Endothelial cell of umbilical vein (primary cell): ENCODE measurements at regions of chr19 and their contacts with region 1.

Region 1: GRCh38 chr19:44723952-44724319 is 24.6 kb upstream of the BCL3 start:
- DNase-seq: peak; percentile 81
- H3K4me3 ChIP-seq: no peak overlapping the region
- H3K27ac ChIP-seq: no peak overlapping the region
- H3K4me1 ChIP-seq: peaks cover 36% of the 10 kb centered on the region
- H3K27me3 ChIP-seq: no peaks in the 10 kb centered on the region
- CTCF ChIP-seq: peak; percentile 90 to 98
- POLR2A ChIP-seq: no peak

Region 2: DNA sequence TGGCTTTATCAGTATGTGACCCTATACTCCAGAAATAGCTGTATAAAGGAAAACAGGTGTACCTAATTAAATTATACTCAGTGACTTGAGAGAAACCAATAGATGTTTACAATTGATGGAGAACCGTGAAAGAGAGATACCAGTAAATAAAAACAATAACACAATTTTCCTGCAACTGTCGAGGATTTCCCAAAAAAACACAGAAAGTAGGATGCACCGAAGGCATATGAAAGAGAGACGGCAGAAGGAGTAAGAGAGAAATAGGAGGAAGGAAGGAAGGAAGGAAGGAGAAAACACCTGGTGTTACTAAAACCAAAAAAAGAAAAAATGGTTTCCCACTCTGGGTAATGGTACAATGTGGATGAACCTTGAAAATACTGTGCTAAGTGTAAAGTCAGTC is 268.8 kb before region 1 on chr19:
- CTCF ChIA-PET with region 1: no interaction called
- POLR2A ChIA-PET with region 1: no interaction called
- dilution Hi-C with region 1: no loop called
- intact Hi-C with region 1: no loop called
- DNase-seq: no peak
- H3K4me3 ChIP-seq: no peak overlapping the region
- H3K27ac ChIP-seq: no peak overlapping the region
- H3K4me1 ChIP-seq: no peaks in the 10 kb centered on the region
- H3K27me3 ChIP-seq: no peaks in the 10 kb centered on the region
- CTCF ChIP-seq: no peak
- POLR2A ChIP-seq: no peak

Region 3: DNA sequence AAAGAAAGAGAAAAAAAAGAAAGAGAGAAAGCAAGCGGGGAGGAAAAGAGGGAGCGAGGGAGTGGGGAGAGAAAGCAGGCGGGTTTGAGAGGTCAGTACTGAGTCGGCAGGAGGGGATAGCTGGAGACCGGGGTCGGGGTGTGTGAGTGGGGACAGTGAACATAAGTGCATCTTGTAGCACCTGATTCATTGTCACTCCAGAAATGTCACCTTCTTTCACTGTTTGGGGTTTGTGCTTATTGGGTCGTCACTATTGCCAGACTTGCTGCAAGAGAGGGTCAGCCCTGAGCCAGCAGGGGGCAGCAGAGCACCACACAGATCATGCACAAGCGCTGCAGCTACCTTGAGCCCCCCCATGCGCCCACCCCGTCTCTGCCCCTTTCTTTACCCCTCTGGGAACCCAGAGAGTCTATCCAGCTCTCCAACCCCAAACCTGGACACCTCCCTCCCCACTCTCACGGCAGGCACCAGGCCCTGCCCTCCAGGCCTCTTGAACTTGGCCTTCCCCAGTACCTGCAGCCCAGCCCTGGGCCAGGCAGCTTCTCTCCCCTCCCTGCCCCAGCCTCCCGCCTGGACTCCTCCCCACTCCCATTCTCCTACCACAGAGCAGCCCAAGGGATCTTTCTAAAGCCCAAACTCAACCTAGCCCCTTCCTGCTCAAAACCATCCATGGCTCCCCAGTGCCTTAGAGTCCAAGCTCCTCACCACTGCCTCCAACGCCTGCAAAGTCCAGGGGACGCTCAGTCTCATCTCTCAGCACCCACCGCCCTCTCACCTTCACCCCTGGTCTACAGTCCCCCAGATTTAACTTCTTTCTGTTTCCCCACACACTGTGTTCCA is 34.7 kb before region 1 on chr19:
- CTCF ChIA-PET with region 1: interaction called, 239 read pairs
- POLR2A ChIA-PET with region 1: interaction called, 3 read pairs
- dilution Hi-C with region 1: no loop called
- intact Hi-C with region 1: loop called (anchors 1 kb)
- DNase-seq: peak; percentile 70
- H3K4me3 ChIP-seq: no peak overlapping the region
- H3K27ac ChIP-seq: no peak overlapping the region
- H3K4me1 ChIP-seq: peaks cover 30% of the 10 kb centered on the region
- H3K27me3 ChIP-seq: no peaks in the 10 kb centered on the region
- CTCF ChIP-seq: peak; percentile 79 to 96
- POLR2A ChIP-seq: no peak

Region 4: DNA sequence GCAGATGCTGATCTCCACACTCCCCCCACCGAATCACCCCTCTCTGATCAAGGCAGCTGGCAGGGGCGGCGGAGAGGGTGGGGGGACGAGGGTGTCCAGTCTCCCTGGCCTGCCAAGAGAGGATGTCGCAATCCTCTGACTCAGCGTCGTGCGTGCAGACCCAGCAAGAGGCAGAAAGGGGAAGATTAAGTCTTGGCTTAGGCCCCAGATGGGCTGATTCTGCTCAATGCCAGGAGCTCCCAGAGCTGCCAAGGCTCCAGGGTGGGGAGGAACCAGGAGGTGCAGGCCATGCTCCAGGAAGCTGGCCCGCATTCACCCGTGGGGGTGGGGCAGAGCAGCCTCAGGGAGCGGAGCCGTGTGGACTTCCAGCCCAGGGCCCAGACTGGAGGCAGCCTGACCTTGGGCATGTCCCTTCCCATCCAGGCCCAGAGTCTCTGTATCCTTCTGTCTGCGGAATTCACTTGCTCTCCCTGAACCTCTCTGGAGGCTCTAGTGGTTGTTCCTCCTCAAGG is 18.0 kb after region 1 on chr19:
- CTCF ChIA-PET with region 1: interaction called, 57 read pairs
- POLR2A ChIA-PET with region 1: interaction called, 4 read pairs
- dilution Hi-C with region 1: no loop called
- intact Hi-C with region 1: no loop called
- DNase-seq: peak; percentile 98
- H3K4me3 ChIP-seq: no peak overlapping the region
- H3K27ac ChIP-seq: peak overlapping the region; percentile 96
- H3K4me1 ChIP-seq: peaks cover 25% of the 10 kb centered on the region
- H3K27me3 ChIP-seq: no peaks in the 10 kb centered on the region
- CTCF ChIP-seq: no peak
- POLR2A ChIP-seq: peak; percentile 83

Region 5: DNA sequence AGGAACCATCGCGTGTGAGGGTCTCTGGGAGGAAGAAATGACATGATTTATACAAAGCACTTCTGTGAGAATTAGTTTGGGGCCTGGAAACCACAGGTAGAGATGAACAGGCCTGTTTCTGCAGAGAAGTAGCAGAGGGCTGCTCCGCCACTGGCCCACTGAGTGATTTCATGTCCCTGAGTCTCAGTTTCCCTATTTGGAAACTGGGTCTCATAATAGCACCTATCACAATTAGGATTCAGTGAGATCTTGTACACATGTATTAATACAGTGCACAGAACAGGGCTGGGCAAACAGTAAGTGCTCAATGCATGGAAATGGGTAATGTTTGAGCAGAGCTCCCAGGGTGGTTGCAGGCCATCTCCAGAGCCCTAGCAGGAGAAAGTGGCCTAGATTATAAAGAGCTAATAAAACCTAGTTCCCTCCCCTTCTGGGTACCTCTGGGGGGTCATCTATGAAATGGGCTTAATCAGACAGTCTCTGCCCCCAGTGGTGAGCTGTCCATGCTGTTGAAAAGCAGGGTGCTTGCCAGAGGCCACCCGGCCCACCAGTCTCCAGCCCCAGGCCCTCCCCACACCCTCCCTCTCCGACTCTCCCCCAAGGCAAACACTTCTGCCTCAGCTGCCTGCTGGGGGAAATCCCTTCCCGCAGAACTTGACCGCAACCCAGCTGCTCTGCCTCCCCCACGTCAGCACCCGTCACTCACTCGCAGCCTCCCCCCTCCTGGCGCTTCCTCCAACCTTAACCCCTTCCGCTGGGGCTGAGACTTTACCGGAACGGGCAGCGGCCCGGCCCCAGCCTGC is 29.1 kb after region 1 on chr19:
- CTCF ChIA-PET with region 1: interaction called, 82 read pairs
- POLR2A ChIA-PET with region 1: interaction called, 3 read pairs
- dilution Hi-C with region 1: no loop called
- intact Hi-C with region 1: loop called (anchors 2 kb)
- DNase-seq: peak; percentile 91
- H3K4me3 ChIP-seq: peak overlapping the region in 1 of 3 experiments; percentile 17
- H3K27ac ChIP-seq: peak overlapping the region; percentile 86
- H3K4me1 ChIP-seq: peaks cover 44% of the 10 kb centered on the region
- H3K27me3 ChIP-seq: no peaks in the 10 kb centered on the region
- CTCF ChIP-seq: no peak
- POLR2A ChIP-seq: peak; percentile 40

Region 6: DNA sequence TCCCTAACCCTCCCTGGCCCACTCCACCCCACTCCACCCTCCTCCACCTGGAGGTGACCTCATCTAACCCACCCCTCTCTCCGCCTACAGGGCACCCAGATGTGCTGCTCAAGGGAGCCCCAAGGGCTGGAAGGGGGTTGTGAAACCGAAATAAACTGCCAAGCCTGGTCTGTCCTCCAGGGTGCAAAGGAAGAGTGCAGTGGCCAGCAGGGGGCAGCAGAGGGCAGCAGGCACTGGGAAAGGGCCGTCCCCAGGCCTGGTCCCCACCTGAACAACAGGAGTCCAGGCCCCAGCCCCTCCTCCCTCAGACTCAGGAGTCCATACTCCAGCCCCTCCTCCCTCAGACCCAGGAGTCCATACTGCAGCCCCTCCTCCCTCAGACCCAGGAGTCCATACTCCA is 76.5 kb after region 1 on chr19:
- CTCF ChIA-PET with region 1: interaction called, 12 read pairs
- POLR2A ChIA-PET with region 1: interaction called, 3 read pairs
- dilution Hi-C with region 1: no loop called
- intact Hi-C with region 1: no loop called
- DNase-seq: peak; percentile 68
- H3K4me3 ChIP-seq: no peak overlapping the region
- H3K27ac ChIP-seq: no peak overlapping the region
- H3K4me1 ChIP-seq: peaks cover 14% of the 10 kb centered on the region
- H3K27me3 ChIP-seq: no peaks in the 10 kb centered on the region
- CTCF ChIP-seq: peak; percentile 91 to 98
- POLR2A ChIP-seq: no peak

Region 7: DNA sequence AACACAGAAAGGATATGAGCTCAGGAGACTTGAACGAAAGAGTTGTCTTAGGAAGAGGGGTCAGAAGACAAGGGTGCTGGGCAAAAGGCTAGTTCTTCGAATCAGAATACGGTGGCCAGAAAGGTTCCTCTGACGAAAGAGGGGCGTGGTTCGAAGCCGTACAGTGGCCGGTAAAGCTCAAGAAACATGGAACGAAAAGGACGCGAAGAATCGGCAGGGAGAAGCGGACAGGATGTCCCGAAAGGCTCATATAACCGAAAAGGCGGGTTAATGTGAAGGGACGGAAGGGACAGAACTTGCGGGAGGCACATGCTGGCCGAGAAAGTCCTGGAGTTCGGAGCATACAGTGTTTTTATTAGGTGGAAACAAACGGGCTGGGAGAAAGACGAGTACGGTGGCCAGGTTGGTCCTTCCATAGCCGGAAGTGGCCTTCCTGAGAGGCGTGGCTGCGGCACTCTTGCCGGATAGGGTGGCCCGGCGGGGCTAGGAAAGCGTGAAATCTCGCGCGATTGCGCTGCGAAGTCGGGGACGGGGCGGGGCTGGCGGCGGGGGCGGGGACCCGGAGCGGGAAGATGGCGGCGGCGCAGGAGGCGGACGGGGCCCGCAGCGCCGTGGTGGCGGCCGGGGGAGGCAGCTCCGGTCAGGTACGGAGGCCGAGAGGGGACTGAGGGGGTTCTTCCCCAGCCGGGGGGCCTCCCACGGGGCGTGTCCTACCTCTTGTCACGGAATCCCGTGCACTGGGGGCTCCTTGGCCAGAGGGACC is 231.1 kb after region 1 on chr19 and contains the start of gene CLPTM1:
- CTCF ChIA-PET with region 1: interaction called, 4 read pairs
- POLR2A ChIA-PET with region 1: no interaction called
- dilution Hi-C with region 1: no loop called
- intact Hi-C with region 1: loop called (anchors 5 kb)
- DNase-seq: peak; percentile 96
- H3K4me3 ChIP-seq: peak within 1 kb of the TSS; percentile 87 to 95 (median 90)
- H3K27ac ChIP-seq: peak within 1 kb of the TSS; percentile 93
- H3K4me1 ChIP-seq: peaks cover 15% of the 10 kb centered on the region
- H3K27me3 ChIP-seq: no peaks in the 10 kb centered on the region
- CTCF ChIP-seq: no peak
- POLR2A ChIP-seq: peak; percentile 82
- total RNA-seq, gene CLPTM1: 108 and 115 TPM in 2 replicates